ENCODE measurements at regions of chr4 and their contacts with region 1.

Region 1: GRCh38 chr4:26325191-26325590 is 4.4 kb downstream of the RBPJ start:
- DNase-seq: peak; percentile 57
- H3K4me3 ChIP-seq: no peak overlapping the region
- H3K27ac ChIP-seq: no peak overlapping the region
- H3K4me1 ChIP-seq: peaks cover 23% of the 10 kb centered on the region
- CTCF ChIP-seq: peak; percentile 82

Region 2: GRCh38 chr4:26015133-26015651 is 310.0 kb before region 1 on chr4:
- CTCF ChIA-PET with region 1: no interaction called
- POLR2A ChIA-PET with region 1: no interaction called
- intact Hi-C with region 1: no loop called
- DNase-seq: no peak
- H3K4me3 ChIP-seq: no peak overlapping the region
- H3K27ac ChIP-seq: no peak overlapping the region
- H3K4me1 ChIP-seq: no peaks in the 10 kb centered on the region
- CTCF ChIP-seq: no peak

Region 3: DNA sequence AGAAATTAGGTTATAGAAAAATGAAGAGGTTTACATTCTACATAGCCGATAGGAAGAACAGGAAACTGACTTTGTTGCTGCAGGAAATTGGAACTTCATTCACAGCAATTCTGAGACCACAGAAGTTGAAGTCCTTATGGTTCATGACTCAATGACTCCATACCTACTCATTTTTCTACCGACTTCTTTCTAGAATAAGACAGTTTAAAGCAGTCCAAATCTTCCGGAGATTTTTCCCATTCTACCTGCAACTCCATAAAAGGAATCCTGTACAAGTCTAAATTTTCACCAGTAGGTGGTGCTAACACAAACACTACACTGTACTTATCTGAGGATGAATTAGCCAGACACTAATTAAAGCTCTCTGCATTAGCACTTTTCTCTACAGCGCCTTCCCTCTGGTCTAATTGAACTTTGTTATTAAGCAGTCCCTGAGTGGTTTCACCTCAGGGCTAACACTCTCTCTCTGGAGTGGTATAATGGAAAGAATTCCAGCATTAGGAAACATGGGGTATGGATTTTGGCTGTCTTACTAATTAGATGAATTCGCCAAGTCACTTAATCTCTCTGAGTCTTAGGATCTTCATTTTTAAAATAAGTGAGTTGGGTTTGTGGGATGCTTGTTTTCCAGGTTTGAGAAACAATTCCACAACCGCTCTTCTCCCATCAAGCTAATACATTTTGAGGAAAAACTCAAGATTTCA is 243.2 kb before region 1 on chr4:
- CTCF ChIA-PET with region 1: no interaction called
- POLR2A ChIA-PET with region 1: no interaction called
- intact Hi-C with region 1: loop called (anchors 1 kb)
- DNase-seq: peak; percentile 68
- H3K4me3 ChIP-seq: no peak overlapping the region
- H3K27ac ChIP-seq: no peak overlapping the region
- H3K4me1 ChIP-seq: no peaks in the 10 kb centered on the region
- CTCF ChIP-seq: peak; percentile 94